ENCODE measurements at regions of chr3 and their contacts with region 1.

Region 1: GRCh38 chr3:25448750-25449692 is 21.0 kb downstream of the RARB start:
- DNase-seq: no peak
- ATAC-seq: no peak
- H3K4me3 ChIP-seq: no peak overlapping the region
- H3K4me3 Mint-ChIP-seq: no peak overlapping the region
- H3K27ac ChIP-seq: no peak overlapping the region
- H3K27ac Mint-ChIP-seq: no peak overlapping the region
- H3K4me1 ChIP-seq: no peaks in the 10 kb centered on the region
- H3K4me1 Mint-ChIP-seq: no peaks in the 10 kb centered on the region
- H3K27me3 ChIP-seq: no peaks in the 10 kb centered on the region
- H3K27me3 Mint-ChIP-seq: peaks cover 0 to 3% of the 10 kb centered on the region in 2 donors
- CTCF ChIP-seq: no peak

Region 2: DNA sequence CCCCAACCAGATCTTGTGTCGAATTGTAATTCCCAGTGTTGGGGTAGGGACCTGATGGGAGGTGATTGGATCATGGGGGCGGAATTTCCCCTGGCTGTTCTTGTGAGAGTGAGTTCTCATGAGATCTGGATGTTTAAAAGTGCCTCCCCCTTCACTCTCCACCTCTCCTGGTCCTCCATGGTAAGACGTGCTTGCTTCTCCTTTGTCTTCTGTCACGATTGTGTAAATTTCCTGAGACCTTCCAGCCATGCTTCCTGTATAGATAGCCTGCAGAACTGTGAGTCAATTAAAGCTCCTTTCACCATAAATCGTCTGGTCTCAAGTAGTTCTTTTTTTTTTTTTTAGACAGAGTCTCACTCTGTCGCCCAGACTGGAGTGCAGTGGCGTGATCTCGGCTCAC is 1461.7 kb before region 1 on chr3:
- intact Hi-C with region 1: loop called (anchors 5 kb)
- DNase-seq: no peak
- ATAC-seq: no peak
- H3K4me3 ChIP-seq: no peak overlapping the region
- H3K4me3 Mint-ChIP-seq: no peak overlapping the region
- H3K27ac ChIP-seq: no peak overlapping the region
- H3K27ac Mint-ChIP-seq: no peak overlapping the region
- H3K4me1 ChIP-seq: no peaks in the 10 kb centered on the region
- H3K4me1 Mint-ChIP-seq: peaks cover 7 to 13% of the 10 kb centered on the region in 2 donors
- H3K27me3 ChIP-seq: no peaks in the 10 kb centered on the region
- H3K27me3 Mint-ChIP-seq: no peaks in the 10 kb centered on the region
- CTCF ChIP-seq: no peak

Region 3: GRCh38 chr3:25483456-25483855 is 34.4 kb after region 1 on chr3:
- intact Hi-C with region 1: no loop called
- DNase-seq: no peak
- ATAC-seq: no peak
- H3K4me3 ChIP-seq: no peak overlapping the region
- H3K4me3 Mint-ChIP-seq: no peak overlapping the region
- H3K27ac ChIP-seq: no peak overlapping the region
- H3K27ac Mint-ChIP-seq: no peak overlapping the region
- H3K4me1 ChIP-seq: no peaks in the 10 kb centered on the region
- H3K4me1 Mint-ChIP-seq: no peaks in the 10 kb centered on the region
- H3K27me3 ChIP-seq: no peaks in the 10 kb centered on the region
- H3K27me3 Mint-ChIP-seq: peaks cover 0 to 3% of the 10 kb centered on the region in 2 donors
- CTCF ChIP-seq: no peak

Region 4: DNA sequence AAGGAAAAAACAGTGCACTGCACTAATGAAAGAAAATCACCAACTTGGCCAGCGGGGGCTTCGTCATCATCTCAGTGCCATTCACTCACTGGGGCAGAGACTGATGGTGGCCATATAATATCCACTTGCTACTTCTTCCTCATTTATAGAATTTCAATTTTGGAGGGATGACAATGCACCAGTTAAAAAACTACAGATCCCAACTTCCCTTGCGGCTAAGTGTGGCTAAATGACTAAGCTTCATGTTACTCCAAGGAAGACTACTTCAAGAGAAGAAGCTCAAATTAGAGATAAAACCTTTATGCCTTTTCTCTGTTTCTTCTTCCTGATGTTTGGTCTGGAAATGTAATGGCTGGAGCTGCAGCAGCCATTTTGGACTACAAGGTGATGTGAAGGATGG is 295.4 kb after region 1 on chr3:
- intact Hi-C with region 1: no loop called
- DNase-seq: no peak
- ATAC-seq: no peak
- H3K4me3 ChIP-seq: no peak overlapping the region
- H3K4me3 Mint-ChIP-seq: no peak overlapping the region
- H3K27ac ChIP-seq: no peak overlapping the region
- H3K27ac Mint-ChIP-seq: peak overlapping the region; percentile 3
- H3K4me1 ChIP-seq: no peaks in the 10 kb centered on the region
- H3K4me1 Mint-ChIP-seq: peaks cover 14 to 28% of the 10 kb centered on the region in 2 donors
- H3K27me3 ChIP-seq: no peaks in the 10 kb centered on the region
- H3K27me3 Mint-ChIP-seq: no peaks in the 10 kb centered on the region
- CTCF ChIP-seq: no peak